ENCODE measurements at regions of chr7 and their contacts with region 1.

Region 1: GRCh38 chr7:106461993-106462859 is 177.4 kb upstream of the NAMPT start:
- DNase-seq: no peak
- ATAC-seq: peak; percentile 69
- H3K4me3 Mint-ChIP-seq: peak overlapping the region; percentile 8
- H3K27ac Mint-ChIP-seq: peak overlapping the region; percentile 75
- H3K4me1 Mint-ChIP-seq: peaks cover 36% of the 10 kb centered on the region
- H3K27me3 Mint-ChIP-seq: no peaks in the 10 kb centered on the region

Region 2: GRCh38 chr7:105581066-105581842 is 881.0 kb before region 1 on chr7 and contains the start of gene EFCAB10:
- CTCF ChIA-PET with region 1: no interaction called
- POLR2A ChIA-PET with region 1: no interaction called
- intact Hi-C with region 1: no loop called
- DNase-seq: peak; percentile 83
- ATAC-seq: peak; percentile 95
- H3K4me3 Mint-ChIP-seq: peak within 1 kb of the TSS; percentile 65
- H3K27ac Mint-ChIP-seq: no peak within 1 kb of the TSS
- H3K4me1 Mint-ChIP-seq: peaks cover 6% of the 10 kb centered on the region
- H3K27me3 Mint-ChIP-seq: peaks cover 14% of the 10 kb centered on the region
- total RNA-seq, gene EFCAB10: not detected

Region 3: DNA sequence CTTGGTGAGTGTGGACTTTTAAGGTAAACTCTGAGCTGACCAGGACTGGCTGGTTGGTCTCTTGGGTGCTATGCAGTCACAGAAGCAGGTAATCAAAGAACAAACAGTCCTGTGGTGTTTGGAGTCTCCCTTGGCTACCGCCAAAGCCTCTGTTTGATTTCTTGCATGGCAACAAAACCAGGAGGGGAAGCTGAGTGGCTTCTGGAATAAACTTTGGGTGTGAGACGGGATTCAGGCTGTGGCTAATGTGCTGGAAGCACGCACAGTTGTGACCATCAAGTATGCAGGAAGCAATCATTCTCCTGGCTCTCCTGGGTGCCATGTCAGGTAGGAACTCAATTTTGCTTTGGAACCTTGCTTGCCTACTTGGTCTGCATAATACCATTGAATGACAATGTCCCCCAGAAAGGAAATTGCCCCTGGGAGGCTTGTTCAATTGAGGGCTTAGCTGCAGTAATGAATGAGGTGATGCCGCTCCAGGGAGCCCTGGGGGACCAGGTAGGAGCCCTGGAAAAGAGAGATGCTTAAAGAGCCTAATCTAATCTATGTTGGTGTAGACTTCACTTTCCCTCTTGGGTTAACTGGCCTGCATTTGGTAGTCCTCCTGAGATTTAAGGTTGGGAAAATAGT is 499.1 kb before region 1 on chr7 and contains the start of gene CDHR3:
- CTCF ChIA-PET with region 1: no interaction called
- POLR2A ChIA-PET with region 1: no interaction called
- intact Hi-C with region 1: no loop called
- DNase-seq: no peak
- ATAC-seq: no peak
- H3K4me3 Mint-ChIP-seq: no peak within 1 kb of the TSS
- H3K27ac Mint-ChIP-seq: no peak within 1 kb of the TSS
- H3K4me1 Mint-ChIP-seq: no peaks in the 10 kb centered on the region
- H3K27me3 Mint-ChIP-seq: no peaks in the 10 kb centered on the region
- total RNA-seq, gene CDHR3: 0.55 to 0.93 TPM

Region 4: DNA sequence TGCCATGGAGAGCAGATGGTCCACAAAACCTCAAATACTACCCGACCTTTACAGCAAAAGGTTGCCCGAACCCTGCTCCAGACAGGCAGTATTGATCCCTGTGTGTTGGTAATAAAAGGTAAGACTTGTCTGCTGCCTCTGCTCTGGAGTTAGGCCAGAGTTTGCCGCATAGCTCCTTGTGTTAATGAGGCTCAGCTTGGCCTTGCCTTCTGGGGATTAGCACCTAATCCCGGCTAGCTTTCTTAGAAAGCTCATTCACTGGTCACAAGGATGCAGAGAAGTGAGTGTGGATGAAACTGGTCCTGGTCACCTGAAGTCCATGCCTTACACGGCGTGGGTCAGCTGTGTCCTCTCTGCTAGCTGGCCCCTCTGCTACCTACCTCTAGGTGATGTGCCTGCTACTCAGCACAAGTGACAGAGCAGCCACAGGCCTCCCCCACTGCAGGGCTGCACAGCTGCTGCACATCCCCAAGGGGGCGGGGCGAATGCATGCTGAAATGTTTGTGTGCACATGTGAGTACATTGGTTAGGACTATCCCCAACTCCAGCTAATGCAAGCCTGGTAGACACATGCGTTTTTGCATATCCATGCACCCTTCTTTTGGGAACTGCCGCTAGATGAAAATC is 318.4 kb before region 1 on chr7:
- CTCF ChIA-PET with region 1: no interaction called
- POLR2A ChIA-PET with region 1: no interaction called
- intact Hi-C with region 1: no loop called
- DNase-seq: peak; percentile 12
- ATAC-seq: no peak
- H3K4me3 Mint-ChIP-seq: no peak overlapping the region
- H3K27ac Mint-ChIP-seq: no peak overlapping the region
- H3K4me1 Mint-ChIP-seq: no peaks in the 10 kb centered on the region
- H3K27me3 Mint-ChIP-seq: no peaks in the 10 kb centered on the region

Region 5: DNA sequence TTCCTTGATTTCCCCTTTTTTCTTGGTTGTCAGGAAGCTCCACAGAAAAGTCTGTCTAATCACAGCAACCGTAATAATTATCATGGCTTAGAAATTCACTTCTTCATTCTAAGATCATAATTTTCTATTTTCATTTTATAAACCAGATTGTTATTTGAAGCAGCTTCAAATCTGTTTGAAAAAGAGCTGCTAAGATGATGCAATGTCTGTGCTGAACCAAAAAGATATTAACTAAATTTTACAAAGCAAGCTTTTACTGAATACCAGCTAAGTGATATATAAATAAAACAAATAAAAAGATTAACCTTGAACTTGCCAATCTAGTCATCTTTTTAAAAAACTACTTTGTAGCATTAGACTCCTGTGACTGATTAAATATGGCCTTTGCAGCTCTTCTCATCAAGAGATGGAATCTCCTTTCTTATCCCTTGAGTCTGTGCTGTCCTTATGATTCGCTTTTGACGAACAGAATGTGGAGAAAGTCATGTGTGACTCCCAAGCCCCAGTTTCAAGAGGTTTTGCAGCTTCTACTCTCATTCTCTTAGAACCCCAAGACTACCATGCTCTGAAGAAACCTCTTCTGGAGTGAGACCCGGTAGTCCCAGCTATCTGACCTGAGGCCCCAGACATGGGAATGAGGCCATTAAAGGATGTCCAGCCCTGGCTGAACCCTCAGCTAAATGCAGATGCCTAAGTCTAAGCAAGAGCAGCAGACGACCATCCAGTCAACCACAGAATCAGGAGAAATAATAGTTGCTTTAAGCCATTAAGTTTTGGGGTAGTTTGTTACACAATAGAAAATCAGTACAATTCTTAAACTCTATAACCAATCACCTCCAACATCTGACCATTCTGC is 191.9 kb before region 1 on chr7:
- CTCF ChIA-PET with region 1: interaction called, 13 read pairs
- POLR2A ChIA-PET with region 1: interaction called, 3 read pairs
- intact Hi-C with region 1: no loop called
- DNase-seq: no peak
- ATAC-seq: peak; percentile 16
- H3K4me3 Mint-ChIP-seq: no peak overlapping the region
- H3K27ac Mint-ChIP-seq: peak overlapping the region; percentile 56
- H3K4me1 Mint-ChIP-seq: peaks cover 27% of the 10 kb centered on the region
- H3K27me3 Mint-ChIP-seq: no peaks in the 10 kb centered on the region

Region 6: DNA sequence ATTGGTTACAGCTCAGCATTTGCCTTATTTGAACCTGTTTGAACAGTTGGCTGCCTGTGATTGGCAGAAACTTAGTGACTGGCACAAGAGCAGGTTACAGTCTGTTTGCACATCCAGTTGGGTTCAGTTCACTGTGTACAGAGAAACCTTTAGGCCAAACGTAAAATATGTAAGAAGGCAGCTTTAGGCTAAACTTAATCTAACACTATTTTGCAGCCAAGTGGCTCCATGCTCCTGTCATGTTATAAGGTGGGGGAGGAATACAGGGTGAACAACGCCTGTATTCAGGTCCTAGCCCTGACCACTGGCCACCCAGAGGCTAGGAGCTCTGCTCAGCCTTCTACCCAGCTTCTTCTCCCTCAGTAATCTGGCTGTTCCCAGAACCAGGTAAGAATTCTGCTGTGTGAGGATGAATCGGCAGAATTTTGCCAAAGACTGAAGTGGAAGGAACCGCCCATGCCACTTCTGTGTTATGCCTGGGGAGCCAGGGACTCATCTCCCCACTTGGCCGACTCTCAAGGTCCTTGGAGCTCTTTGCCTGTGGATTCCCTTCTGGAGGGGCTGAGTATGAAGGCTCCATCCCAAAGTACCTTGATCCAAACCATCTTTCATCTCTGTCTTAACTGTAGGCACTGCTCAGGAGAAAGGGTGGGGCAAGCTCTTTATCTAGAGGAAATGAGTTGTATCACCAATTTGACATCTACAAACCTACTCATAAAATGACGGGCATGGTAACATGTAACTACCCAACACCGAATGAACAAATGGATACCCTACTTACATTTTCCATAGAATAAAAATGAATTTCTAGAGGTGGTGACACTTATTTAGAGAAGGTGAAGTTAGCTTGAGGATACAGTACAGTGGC is 13.0 kb before region 1 on chr7:
- CTCF ChIA-PET with region 1: interaction called, 18 read pairs
- POLR2A ChIA-PET with region 1: no interaction called
- intact Hi-C with region 1: no loop called
- DNase-seq: no peak
- ATAC-seq: peak; percentile 90
- H3K4me3 Mint-ChIP-seq: no peak overlapping the region
- H3K27ac Mint-ChIP-seq: peak overlapping the region; percentile 49
- H3K4me1 Mint-ChIP-seq: peaks cover 15% of the 10 kb centered on the region
- H3K27me3 Mint-ChIP-seq: peaks cover 24% of the 10 kb centered on the region

Region 7: GRCh38 chr7:107103363-107103762 is 641.1 kb after region 1 on chr7:
- CTCF ChIA-PET with region 1: no interaction called
- POLR2A ChIA-PET with region 1: no interaction called
- intact Hi-C with region 1: no loop called
- DNase-seq: peak; percentile 10
- ATAC-seq: peak; percentile 57
- H3K4me3 Mint-ChIP-seq: no peak overlapping the region
- H3K27ac Mint-ChIP-seq: no peak overlapping the region
- H3K4me1 Mint-ChIP-seq: peaks cover 3% of the 10 kb centered on the region
- H3K27me3 Mint-ChIP-seq: no peaks in the 10 kb centered on the region